PC-9 (cell line): ENCODE measurements at regions of chr3 and their contacts with region 1.

Region 1: DNA sequence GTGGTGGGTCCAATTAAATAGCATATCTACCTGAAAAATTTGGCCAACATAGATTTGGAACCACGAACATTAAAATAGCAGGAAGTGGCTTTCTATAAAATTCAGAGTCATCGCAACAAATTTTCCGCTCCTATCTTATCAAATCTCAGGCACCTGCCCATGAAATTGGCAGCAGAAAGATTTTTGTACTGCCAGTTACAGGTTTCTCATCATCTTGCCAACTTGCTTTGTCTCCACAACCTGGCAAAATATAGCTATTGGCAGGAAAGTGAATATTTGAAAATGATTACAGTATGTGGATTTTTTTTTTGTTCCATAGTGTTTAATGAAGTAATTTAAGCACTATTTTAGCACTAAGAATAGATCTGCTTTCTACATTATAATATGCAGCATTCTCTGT is 161.6 kb upstream of the LRRC3B start:
- DNase-seq: no peak
- H3K4me3 ChIP-seq: no peak overlapping the region
- H3K27ac ChIP-seq: no peak overlapping the region
- H3K4me1 ChIP-seq: no peaks in the 10 kb centered on the region
- H3K27me3 ChIP-seq: no peaks in the 10 kb centered on the region
- CTCF ChIP-seq: no peak

Region 2: DNA sequence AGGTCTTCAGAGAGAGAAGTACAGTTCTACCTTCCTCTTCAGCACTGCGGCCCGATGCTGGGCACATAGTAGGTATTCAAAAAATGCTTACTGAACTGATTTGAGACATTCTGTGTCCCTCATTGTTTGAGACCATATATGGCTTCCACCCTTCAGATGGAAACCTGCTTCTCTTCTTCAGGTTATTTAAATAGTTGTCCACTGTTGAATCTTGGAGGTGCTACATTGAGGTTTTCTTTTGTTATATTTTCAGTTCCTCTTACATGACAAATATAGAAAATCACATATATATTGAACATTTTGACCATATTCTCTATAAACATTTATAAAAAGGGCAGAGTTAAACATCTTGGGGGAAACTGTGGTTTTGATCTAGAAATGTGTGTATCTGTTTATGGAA is 38.6 kb before region 1 on chr3:
- CTCF ChIA-PET with region 1: no interaction called
- POLR2A ChIA-PET with region 1: no interaction called
- intact Hi-C with region 1: no loop called
- DNase-seq: no peak
- H3K4me3 ChIP-seq: no peak overlapping the region
- H3K27ac ChIP-seq: no peak overlapping the region
- H3K4me1 ChIP-seq: no peaks in the 10 kb centered on the region
- H3K27me3 ChIP-seq: no peaks in the 10 kb centered on the region
- CTCF ChIP-seq: no peak

Region 3: GRCh38 chr3:26449996-26450395 is 11.0 kb before region 1 on chr3:
- CTCF ChIA-PET with region 1: no interaction called
- POLR2A ChIA-PET with region 1: no interaction called
- intact Hi-C with region 1: no loop called
- DNase-seq: no peak
- H3K4me3 ChIP-seq: no peak overlapping the region
- H3K27ac ChIP-seq: no peak overlapping the region
- H3K4me1 ChIP-seq: no peaks in the 10 kb centered on the region
- H3K27me3 ChIP-seq: no peaks in the 10 kb centered on the region
- CTCF ChIP-seq: no peak

Region 4: GRCh38 chr3:27290760-27291159 is 829.8 kb after region 1 on chr3:
- CTCF ChIA-PET with region 1: no interaction called
- POLR2A ChIA-PET with region 1: interaction called, 10 read pairs
- intact Hi-C with region 1: no loop called
- DNase-seq: no peak
- H3K4me3 ChIP-seq: no peak overlapping the region
- H3K27ac ChIP-seq: no peak overlapping the region
- H3K4me1 ChIP-seq: no peaks in the 10 kb centered on the region
- H3K27me3 ChIP-seq: no peaks in the 10 kb centered on the region
- CTCF ChIP-seq: no peak